Panc1 (cell line): ENCODE measurements at regions of chr1 and their contacts with region 1.

Region 1: DNA sequence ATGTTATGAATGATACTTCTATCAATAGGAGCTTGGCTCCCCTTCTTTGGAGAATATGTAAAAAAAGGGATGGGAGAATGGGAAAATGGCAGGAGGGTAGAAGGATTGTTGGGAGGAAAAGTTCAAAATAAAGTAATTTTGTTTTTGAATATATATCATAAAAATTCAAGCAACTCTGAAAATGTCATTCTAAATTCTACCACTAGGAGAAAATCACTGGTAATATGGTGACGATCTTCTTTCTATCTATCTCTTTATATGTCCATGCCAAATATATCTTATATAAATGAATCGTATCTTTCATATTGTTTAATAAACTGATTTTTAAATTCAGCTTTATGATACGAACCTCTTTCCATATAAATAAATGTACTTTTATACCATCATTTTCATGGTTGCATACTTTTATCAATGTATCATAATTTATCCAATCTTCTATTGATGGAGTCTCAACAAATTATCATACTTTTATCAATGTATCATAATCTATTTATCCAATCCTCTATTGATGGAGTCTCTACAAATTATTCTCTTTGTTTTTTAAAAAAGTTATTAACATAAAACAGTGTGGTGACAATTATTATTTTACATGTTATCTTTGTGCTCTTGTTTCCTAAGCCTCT is 73.7 kb upstream of the MARK1 start:
- DNase-seq: no peak
- ATAC-seq: no peak
- H3K4me3 ChIP-seq: no peak overlapping the region
- H3K27ac ChIP-seq: no peak overlapping the region
- H3K4me1 ChIP-seq: no peaks in the 10 kb centered on the region
- H3K27me3 ChIP-seq: no peaks in the 10 kb centered on the region; the same call in none of the 2 replicates
- CTCF ChIP-seq: no peak

Region 2: GRCh38 chr1:220420726-220421125 is 33.5 kb before region 1 on chr1:
- CTCF ChIA-PET with region 1: no interaction called
- POLR2A ChIA-PET with region 1: interaction called, 21 read pairs
- in situ Hi-C with region 1: no loop called
- intact Hi-C with region 1: no loop called
- DNase-seq: no peak
- ATAC-seq: no peak
- H3K4me3 ChIP-seq: no peak overlapping the region
- H3K27ac ChIP-seq: no peak overlapping the region
- H3K4me1 ChIP-seq: no peaks in the 10 kb centered on the region; the same call in 1 of the 2 replicates
- H3K27me3 ChIP-seq: no peaks in the 10 kb centered on the region
- CTCF ChIP-seq: no peak

Region 3: DNA sequence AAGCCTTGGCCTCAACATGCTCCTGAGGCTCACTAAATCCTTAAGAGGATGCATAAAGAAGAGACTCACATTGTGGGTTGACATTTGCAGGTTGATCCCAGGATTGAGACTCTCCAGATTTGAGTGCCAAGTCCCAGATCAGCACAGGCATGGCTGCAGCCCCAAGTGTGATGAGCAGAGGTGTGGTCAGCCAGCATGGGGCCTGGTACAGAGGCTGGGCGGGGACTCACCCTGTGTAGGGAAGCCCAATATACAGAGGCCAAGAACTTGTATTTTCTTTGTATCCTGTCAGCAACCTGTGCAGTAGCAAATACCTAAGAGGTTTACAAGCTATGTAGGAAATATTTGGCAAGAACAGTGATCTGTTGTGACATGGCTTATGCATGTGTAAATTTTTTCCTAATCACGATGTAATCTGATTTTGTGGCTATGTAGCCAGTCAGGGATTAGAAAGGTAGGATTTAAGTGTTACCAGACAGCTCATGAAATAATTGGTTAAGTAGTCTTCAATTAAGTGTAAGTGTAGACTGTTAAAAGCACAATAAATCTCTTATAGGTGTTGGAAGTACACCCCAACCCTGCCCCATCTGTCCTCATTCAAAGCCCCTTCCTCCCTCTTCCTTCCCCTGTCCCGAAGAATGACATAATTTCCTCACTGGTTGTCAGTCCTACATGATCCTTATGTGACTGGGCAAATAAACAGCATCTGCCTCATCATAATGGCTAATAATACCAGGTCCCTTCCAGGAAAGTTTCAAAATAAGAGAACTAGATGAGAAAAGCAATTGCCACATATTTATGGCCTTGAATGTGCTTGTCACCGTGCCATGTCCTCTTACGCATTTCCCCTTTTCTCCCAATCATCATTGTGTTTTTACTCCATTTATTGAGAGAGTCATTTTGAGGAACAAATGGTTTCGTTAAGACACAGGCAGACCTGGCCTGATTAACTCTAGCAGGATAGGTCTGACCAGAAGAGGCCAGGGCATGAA is 545.9 kb after region 1 on chr1:
- CTCF ChIA-PET with region 1: no interaction called
- POLR2A ChIA-PET with region 1: no interaction called
- in situ Hi-C with region 1: no loop called
- intact Hi-C with region 1: no loop called
- DNase-seq: no peak
- ATAC-seq: no peak
- H3K4me3 ChIP-seq: no peak overlapping the region
- H3K27ac ChIP-seq: no peak overlapping the region
- H3K4me1 ChIP-seq: no peaks in the 10 kb centered on the region
- H3K27me3 ChIP-seq: no peaks in the 10 kb centered on the region
- CTCF ChIP-seq: 0 out of 2 replicates have a peak, but pooled peaks have one; percentile 5